ENCODE measurements at regions of chr11 and their contacts with region 1.

Region 1: DNA sequence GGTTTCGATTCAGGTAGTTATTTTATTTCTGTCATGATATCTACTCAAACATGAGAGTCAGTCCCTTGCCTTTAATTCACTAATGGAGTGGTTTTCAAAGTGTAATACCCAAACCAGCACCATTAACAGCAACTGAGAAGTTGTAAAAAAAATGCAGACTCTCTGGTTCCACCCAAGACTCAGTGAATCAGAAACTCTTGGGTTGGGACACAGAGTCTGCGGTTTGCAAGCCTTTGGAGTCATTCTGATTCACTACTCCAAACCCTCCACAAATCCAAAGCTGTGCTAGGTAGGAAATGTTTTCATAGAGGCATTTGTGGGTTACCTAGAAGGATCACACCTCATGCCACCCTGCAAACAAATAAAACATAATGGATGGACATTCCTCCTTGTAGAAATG is 340.1 kb downstream of the NTM start:
- DNase-seq: peak; percentile 38
- ATAC-seq: peak; percentile 44; the same call in 1 of the 2 replicates
- H3K4me3 ChIP-seq: no peak overlapping the region
- H3K27ac ChIP-seq: no peak overlapping the region
- H3K4me1 ChIP-seq: no peaks in the 10 kb centered on the region; the same call in 1 of the 2 replicates
- H3K27me3 ChIP-seq: no peaks in the 10 kb centered on the region; the same call in 1 of the 2 replicates
- CTCF ChIP-seq: no peak
- POLR2A ChIP-seq: no peak
- RAD21 ChIP-seq: no peak

Region 2: DNA sequence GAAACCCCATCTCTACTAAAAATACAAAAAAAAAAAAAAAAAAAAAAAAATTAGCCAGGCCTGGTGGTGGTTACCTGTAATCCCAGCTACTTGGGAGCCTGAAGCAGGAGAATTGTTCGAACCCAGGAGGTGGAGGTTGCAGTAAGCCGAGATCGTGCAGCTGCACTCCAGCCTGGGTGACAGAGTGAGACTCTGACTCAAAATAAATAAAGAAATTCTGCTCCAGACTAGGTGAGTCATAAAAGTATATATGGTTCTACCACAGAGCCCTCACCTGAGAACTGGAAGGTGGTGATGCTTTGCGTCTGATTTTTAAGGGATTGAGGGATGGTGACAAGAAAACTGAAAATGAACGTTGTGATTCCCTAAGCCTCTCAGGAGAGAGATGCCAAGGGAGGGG is 281.7 kb before region 1 on chr11:
- CTCF ChIA-PET with region 1: no interaction called
- POLR2A ChIA-PET with region 1: interaction called, 10 read pairs
- dilution Hi-C with region 1: no loop called
- in situ Hi-C with region 1: no loop called
- intact Hi-C with region 1: no loop called
- DNase-seq: no peak
- ATAC-seq: no peak
- H3K4me3 ChIP-seq: no peak overlapping the region
- H3K27ac ChIP-seq: no peak overlapping the region
- H3K4me1 ChIP-seq: no peaks in the 10 kb centered on the region
- H3K27me3 ChIP-seq: no peaks in the 10 kb centered on the region
- CTCF ChIP-seq: no peak
- POLR2A ChIP-seq: no peak
- RAD21 ChIP-seq: no peak

Region 3: GRCh38 chr11:132464003-132464342 is 753.5 kb after region 1 on chr11:
- CTCF ChIA-PET with region 1: no interaction called
- POLR2A ChIA-PET with region 1: no interaction called
- dilution Hi-C with region 1: no loop called
- in situ Hi-C with region 1: no loop called
- intact Hi-C with region 1: no loop called
- DNase-seq: no peak
- ATAC-seq: no peak
- H3K4me3 ChIP-seq: no peak overlapping the region
- H3K27ac ChIP-seq: no peak overlapping the region
- H3K4me1 ChIP-seq: no peaks in the 10 kb centered on the region
- H3K27me3 ChIP-seq: no peaks in the 10 kb centered on the region
- CTCF ChIP-seq: no peak
- POLR2A ChIP-seq: no peak
- RAD21 ChIP-seq: no peak

Measured in IMR-90 (cell line).